ENCODE measurements at regions of chr6 and their contacts with region 1.

Region 1: DNA sequence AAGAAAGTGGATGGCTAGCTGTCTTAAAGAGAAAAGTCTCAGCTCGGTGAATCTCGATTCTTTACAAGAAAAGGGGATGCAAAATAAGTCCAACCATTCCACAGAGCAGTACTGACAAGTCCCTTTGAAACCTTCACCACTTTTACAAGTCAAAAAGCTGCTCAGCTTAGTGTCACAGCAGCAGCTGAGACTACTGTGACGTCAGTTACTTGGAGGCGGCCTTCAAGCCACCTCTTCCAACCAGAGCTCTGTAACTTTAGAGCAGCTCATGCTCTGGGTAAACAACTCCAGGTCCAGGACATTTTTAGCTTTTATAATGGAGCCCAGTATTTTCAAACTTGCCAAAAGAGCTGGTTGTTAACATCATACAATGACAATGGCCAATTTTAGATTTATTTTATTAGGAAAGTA is at the start of gene KIAA0408:
- DNase-seq: peak; percentile 67
- ATAC-seq: peak; percentile 79 to 90
- H3K4me3 ChIP-seq: peak within 1 kb of the TSS; percentile 53
- H3K27ac ChIP-seq: peak within 1 kb of the TSS; percentile 78
- H3K4me1 ChIP-seq: peaks cover 16% of the 10 kb centered on the region
- H3K27me3 ChIP-seq: no peaks in the 10 kb centered on the region
- CTCF ChIP-seq: no peak
- total RNA-seq, gene KIAA0408: 55.1 TPM

Region 2: GRCh38 chr6:126738146-126738545 is 721.1 kb before region 1 on chr6:
- intact Hi-C with region 1: no loop called
- DNase-seq: no peak
- ATAC-seq: no peak
- H3K4me3 ChIP-seq: no peak overlapping the region
- H3K27ac ChIP-seq: no peak overlapping the region
- H3K4me1 ChIP-seq: no peaks in the 10 kb centered on the region
- H3K27me3 ChIP-seq: no peaks in the 10 kb centered on the region
- CTCF ChIP-seq: no peak

Region 3: GRCh38 chr6:127121637-127121960 is 337.6 kb before region 1 on chr6:
- intact Hi-C with region 1: no loop called
- DNase-seq: no peak
- ATAC-seq: no peak
- H3K4me3 ChIP-seq: no peak overlapping the region
- H3K27ac ChIP-seq: no peak overlapping the region
- H3K4me1 ChIP-seq: peaks cover 26% of the 10 kb centered on the region
- H3K27me3 ChIP-seq: peaks cover 38% of the 10 kb centered on the region
- CTCF ChIP-seq: no peak

Region 4: GRCh38 chr6:127302728-127303660 is 156.2 kb before region 1 on chr6:
- intact Hi-C with region 1: loop called (anchors 10 kb)
- DNase-seq: no peak
- ATAC-seq: peak; percentile 80 to 83
- H3K4me3 ChIP-seq: no peak overlapping the region
- H3K27ac ChIP-seq: no peak overlapping the region
- H3K4me1 ChIP-seq: peaks cover 46% of the 10 kb centered on the region
- H3K27me3 ChIP-seq: no peaks in the 10 kb centered on the region
- CTCF ChIP-seq: peak; percentile 72

Region 5: DNA sequence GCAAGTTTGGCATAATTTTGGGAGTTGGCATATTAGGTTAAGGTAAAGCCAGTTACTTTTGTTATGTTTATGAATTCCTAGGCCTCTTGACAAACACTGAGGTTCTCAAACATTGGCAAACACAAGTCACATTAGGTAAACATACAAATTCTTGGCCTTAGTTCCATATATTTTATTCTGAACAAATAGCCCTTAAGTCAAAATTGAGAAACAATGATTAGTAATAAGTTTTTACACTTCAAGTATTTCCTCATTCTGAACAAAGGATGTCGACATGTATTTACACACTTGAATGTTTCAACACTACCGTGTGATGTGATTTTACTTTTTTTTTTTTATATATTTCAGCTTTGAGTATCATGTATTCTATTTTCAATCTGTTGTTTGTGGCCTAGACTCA is 112.1 kb before region 1 on chr6:
- intact Hi-C with region 1: no loop called
- DNase-seq: no peak
- ATAC-seq: peak; percentile 23 to 67
- H3K4me3 ChIP-seq: no peak overlapping the region
- H3K27ac ChIP-seq: peak overlapping the region; percentile 51
- H3K4me1 ChIP-seq: peaks cover 34% of the 10 kb centered on the region
- H3K27me3 ChIP-seq: no peaks in the 10 kb centered on the region
- CTCF ChIP-seq: no peak